ENCODE measurements at regions of chr6 and their contacts with region 1.

Region 1: GRCh38 chr6:36027501-36028087 is at the start of gene MAPK14:
- DNase-seq: peak; percentile 100
- H3K4me3 Mint-ChIP-seq: peak within 1 kb of the TSS; percentile 89
- H3K27ac Mint-ChIP-seq: peak within 1 kb of the TSS; percentile 92
- H3K4me1 Mint-ChIP-seq: peaks cover 35% of the 10 kb centered on the region
- H3K27me3 Mint-ChIP-seq: peaks cover 23% of the 10 kb centered on the region
- total RNA-seq, gene MAPK14: 40.9 and 42.5 TPM in 2 replicates

Region 2: DNA sequence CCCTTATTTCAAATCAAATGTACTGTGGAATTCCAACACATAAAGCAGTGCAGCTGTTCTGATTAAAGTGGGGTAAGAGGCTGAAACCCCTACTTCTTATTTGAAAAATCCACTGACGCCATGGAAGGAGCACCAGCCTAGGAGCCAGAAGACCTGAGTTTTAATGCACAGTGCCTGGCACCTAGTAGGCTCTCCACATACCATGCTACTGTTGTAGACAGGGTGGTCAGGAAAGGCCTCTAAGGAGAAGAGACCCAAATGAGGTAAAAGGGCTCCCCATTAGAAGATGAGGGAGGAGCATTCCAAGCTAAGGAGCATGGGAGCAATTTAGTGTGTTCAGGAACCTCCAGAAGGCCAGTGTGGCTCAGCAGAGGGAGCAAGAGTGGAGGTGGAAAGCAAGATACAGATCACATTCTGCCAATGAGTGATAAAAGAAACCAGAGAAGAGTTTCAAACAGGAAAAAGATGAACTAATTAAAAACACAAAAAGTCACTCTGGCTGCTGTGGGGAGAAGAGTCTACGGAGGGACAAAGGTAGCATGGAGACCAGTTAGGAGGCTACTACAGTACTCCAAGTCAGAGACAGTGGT is 779.9 kb before region 1 on chr6:
- intact Hi-C with region 1: no loop called
- DNase-seq: peak; percentile 64
- H3K4me3 Mint-ChIP-seq: peak overlapping the region; percentile 28
- H3K27ac Mint-ChIP-seq: peak overlapping the region; percentile 10
- H3K4me1 Mint-ChIP-seq: peaks cover 21% of the 10 kb centered on the region
- H3K27me3 Mint-ChIP-seq: no peaks in the 10 kb centered on the region

Region 3: DNA sequence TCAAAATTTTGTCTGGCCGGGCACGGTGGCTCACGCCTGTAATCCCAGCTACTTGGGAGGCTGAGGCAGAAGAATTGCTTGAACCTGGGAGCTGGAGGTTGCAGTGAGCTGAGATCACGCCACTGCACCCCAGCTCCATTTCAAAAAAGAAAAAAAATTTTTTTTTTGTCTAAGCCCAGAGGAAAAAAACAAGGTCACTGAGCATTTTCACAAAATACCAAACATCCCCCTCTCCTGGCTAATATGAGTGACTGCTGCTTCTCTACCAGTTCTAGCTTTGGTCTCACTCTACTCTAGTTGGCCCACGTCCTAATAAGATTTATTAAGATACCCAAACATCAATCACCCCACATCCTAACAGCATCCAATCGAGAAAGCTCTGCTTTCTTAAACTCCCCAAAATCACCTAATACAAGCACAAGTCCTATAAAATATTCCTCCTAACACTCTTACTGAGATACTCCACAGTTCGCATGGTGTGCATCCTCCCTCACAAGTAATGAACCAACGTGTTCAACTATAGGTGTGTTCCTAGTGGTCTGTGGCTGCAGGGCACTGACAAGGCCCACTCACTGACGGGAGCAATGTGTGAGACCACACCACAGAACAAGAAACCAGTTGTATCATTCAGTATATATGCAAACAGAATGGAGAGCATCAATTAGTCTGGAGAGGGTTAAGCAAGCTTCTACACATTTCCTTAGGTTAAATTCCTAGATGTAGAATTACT is 403.1 kb before region 1 on chr6:
- intact Hi-C with region 1: no loop called
- DNase-seq: peak; percentile 63
- H3K4me3 Mint-ChIP-seq: no peak overlapping the region
- H3K27ac Mint-ChIP-seq: peak overlapping the region; percentile 69
- H3K4me1 Mint-ChIP-seq: peaks cover 12% of the 10 kb centered on the region
- H3K27me3 Mint-ChIP-seq: no peaks in the 10 kb centered on the region

Region 4: DNA sequence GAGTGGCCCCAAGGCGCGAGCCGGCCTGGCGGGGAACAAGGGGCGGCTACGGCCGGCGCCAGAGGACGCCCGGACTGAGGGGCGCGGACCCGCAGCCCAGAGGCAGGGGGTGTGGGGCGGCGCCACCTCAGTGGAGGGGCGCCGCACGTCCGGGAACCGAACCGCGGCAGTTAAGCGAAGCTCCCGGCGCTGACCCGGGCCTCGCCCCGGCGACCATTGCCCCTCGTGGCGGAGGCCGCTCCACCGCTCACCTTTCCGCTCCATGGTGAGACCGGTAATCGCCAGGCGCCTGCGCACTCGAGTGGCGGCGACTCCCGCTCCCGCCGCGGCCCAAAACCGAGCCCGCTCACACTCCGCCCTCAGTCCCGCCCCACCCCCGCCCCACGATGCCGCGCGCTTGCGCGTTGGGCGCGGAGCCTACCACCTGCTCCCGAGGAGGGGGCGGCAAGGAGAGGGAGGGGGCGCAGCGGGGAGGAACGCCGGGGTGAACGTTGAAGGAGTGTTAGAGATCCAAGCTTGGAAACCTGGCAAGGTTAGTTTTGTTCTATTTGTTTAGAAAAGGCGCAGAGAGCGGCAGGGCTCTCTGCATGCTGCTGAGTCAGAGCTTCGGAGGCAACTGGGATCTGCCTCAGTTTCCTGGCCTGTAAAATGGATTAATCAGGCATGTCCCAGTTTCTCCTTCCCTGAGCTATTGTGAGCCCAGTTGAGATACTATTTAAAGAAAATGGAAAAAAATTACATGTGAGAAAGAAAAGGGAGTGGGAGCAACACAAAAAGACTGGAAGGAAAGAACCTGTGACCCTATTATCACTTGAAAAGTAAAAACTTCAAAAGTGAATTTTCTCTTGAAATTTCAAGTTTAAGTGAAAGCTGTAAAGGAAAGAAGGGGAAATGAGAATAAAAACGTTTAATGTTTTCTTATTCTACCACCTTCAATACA is 106.5 kb before region 1 on chr6 and contains the start of gene SRPK1:
- intact Hi-C with region 1: loop called (anchors 1 kb)
- DNase-seq: peak; percentile 97
- H3K4me3 Mint-ChIP-seq: peak within 1 kb of the TSS; percentile 98
- H3K27ac Mint-ChIP-seq: peak within 1 kb of the TSS; percentile 98
- H3K4me1 Mint-ChIP-seq: peaks cover 44% of the 10 kb centered on the region
- H3K27me3 Mint-ChIP-seq: no peaks in the 10 kb centered on the region
- total RNA-seq, gene SRPK1: 162 and 163 TPM in 2 replicates

Region 5: DNA sequence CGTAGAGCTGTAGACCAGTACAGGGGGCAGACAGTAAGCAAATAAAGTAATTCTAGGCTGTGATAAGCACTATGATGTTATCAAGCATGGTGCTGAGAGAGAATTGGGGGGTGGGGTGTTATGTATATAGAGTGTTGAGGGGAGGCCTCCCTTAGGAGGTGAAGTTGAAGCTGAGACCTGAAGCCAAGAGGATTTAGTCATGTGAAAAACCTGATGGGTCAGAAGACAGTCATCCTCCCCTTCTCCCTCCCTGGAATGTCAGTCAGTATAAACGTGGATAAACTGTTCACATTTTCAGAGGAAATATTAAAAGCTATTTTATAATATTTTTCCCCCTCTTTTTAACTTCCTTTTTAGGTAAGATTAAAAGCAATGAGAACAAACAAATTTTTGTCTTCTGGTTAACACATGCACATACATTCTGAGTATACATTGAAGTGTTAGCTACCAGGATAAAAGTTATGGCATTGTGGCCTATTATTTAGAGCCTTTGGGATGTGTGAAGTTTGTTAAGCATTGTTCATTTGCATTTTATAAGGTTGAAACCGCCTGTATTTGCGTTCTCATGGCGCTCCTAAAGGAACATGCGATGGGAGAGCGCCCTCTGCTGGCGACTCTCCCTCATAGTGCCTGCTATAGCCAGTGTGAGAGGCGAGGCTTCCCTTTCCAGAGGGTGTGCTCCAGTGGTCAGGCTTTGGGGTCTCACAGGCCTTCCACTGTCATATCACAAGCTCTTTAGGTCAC is 67.3 kb after region 1 on chr6:
- intact Hi-C with region 1: loop called (anchors 1 kb)
- DNase-seq: peak; percentile 94
- H3K4me3 Mint-ChIP-seq: no peak overlapping the region
- H3K27ac Mint-ChIP-seq: no peak overlapping the region
- H3K4me1 Mint-ChIP-seq: peaks cover 21% of the 10 kb centered on the region
- H3K27me3 Mint-ChIP-seq: no peaks in the 10 kb centered on the region

Region 6: DNA sequence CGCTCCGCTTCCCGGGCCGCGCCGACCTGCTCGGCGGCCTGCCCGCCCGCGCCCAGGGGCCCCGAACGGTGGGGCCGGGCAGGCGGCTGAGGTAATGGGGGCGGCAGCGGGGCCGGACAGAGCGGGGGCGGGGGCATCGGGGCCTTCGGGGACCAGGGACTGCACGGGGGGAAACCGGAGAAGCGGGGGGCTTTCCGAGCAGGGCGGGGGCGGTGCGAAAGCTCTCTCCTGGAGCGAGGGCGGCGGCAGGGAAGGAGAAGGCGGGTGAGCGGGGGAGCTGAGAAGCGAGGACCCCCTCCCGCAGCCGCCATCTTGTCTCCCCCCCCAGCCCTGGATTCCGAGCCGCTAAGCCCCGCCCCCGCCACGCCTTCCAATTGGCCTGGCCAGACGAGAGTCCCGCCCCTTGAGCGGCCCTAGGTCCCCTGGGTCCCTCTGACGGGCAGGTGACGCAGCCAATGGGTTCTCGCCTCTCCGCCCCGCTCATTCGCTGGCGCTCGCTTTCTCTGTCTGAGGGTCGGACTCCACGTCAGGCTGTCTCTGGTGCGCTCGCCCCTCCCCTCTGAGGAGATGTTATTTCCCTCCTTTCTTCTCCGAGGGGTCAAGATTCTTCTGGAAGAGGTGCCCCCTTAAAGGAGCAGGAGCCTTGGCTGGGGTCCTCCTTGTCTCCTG is 169.4 kb after region 1 on chr6:
- intact Hi-C with region 1: loop called (anchors 1 kb)
- DNase-seq: peak; percentile 100
- H3K4me3 Mint-ChIP-seq: peak overlapping the region; percentile 95
- H3K27ac Mint-ChIP-seq: peak overlapping the region; percentile 92
- H3K4me1 Mint-ChIP-seq: peaks cover 33% of the 10 kb centered on the region
- H3K27me3 Mint-ChIP-seq: peaks cover 5% of the 10 kb centered on the region

Region 7: DNA sequence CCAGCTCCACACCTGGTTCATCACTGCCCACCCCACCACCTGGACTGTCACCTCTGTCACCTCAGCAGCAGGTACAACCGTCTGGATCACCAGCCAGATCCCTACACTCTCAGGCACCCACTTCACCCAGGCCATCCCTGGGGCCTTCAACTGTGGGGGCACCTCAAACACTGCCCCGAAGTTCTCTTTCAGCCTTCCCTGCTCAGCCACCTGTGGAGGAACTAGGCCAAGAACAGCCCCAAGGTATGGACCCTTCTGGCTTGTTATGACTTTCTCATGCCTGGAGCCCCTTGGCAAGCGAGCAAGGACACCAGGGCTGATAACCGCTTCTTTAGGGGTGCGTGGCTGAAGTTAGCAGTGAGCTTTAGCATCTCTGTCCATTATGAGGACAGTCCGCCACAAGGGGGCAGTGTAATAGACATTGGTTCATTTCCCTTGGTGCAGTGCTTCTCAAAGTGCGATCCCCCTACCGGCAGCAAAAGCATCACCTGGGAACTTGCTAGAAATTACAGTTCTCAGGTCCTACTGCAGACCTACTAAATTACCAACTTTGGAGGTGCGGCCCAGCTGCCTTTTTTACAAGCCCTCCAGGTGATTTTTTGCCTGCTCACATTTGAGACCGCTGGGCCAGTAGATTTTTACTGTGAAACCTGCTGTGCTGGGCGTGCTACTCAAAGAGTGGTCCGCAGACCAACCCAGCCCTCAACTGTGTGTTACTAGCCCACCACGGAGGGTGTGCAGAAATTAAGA is 274.8 kb after region 1 on chr6:
- intact Hi-C with region 1: loop called (anchors 1 kb)
- DNase-seq: peak; percentile 97
- H3K4me3 Mint-ChIP-seq: no peak overlapping the region
- H3K27ac Mint-ChIP-seq: no peak overlapping the region
- H3K4me1 Mint-ChIP-seq: peaks cover 3% of the 10 kb centered on the region
- H3K27me3 Mint-ChIP-seq: peaks cover 21% of the 10 kb centered on the region

Region 8: DNA sequence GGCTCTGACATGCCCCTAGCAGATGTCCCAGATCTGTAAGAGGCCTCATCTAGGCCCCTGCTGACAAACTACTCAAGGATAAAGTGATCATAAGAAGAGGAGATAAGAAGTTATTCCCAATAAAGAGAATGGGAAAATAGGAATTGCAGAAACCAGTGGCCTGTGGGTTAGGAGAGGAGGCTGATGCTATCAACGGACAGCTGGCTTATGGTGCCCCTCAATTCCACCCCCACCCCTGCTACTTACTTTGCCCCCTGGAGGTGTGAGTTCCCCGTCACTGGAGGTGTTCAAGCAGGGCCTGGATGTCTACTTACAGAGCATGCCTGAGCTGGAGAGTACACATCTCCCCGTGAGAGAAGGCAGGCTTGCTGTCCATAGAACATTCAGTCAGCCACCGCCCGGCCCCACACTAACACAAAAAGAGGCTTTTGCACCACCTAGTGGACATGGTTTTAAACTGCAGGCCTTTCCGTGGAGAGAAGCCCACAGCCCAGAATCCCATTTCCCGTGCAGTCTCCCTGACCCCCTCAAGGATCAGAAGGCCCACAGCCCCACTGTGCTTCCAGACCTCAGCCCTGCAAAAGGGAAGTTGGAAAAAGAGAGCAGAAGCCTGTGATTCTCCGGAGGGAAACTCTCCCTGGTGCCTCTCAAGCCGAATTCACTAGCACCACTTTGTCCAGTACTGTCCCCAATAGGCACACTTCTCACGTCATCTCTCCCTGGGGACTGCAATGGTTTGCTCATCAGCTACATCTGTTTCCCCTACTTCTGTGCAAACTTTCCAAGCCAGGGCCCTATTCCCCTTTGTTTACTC is 332.9 kb after region 1 on chr6:
- intact Hi-C with region 1: loop called (anchors 5 kb)
- DNase-seq: peak; percentile 92
- H3K4me3 Mint-ChIP-seq: no peak overlapping the region
- H3K27ac Mint-ChIP-seq: no peak overlapping the region
- H3K4me1 Mint-ChIP-seq: peaks cover 32% of the 10 kb centered on the region
- H3K27me3 Mint-ChIP-seq: peaks cover 18% of the 10 kb centered on the region

Region 9: GRCh38 chr6:36594029-36594815 is 566.6 kb after region 1 on chr6 and contains the start of gene SRSF3:
- intact Hi-C with region 1: loop called (anchors 2 kb)
- DNase-seq: peak; percentile 99
- H3K4me3 Mint-ChIP-seq: peak within 1 kb of the TSS; percentile 92
- H3K27ac Mint-ChIP-seq: peak within 1 kb of the TSS; percentile 98
- H3K4me1 Mint-ChIP-seq: peaks cover 32% of the 10 kb centered on the region
- H3K27me3 Mint-ChIP-seq: no peaks in the 10 kb centered on the region
- total RNA-seq, gene SRSF3: 532 and 572 TPM in 2 replicates